CD8-positive, alpha-beta T cell (primary cell): ENCODE measurements at regions of chr4 and their contacts with region 1.

Region 1: DNA sequence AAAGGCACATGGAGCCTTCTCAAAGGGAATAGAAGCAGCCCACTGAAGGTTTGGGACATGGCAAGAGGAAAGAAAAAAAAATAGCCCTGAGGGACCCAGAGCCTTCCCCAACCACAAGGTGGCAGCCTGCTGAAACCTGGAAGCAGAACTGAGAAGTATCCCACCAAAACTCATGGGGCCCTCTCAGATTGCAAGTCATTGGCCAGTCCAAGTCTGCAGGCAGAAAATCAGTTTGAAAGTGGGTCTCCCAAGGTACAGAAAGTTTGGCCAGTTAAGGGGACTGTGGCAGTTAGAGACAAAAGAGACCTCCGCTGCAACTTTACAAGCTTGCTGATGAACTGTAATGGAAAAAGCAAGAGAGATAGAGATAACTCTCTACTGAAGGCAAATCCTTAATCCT is 155.8 kb downstream of the ANTXR2 start:
- DNase-seq: peak; percentile 3 to 63 (median 43)
- ATAC-seq: peak; percentile 42
- H3K4me3 ChIP-seq: no peak overlapping the region
- H3K4me3 Mint-ChIP-seq: no peak overlapping the region
- H3K27ac ChIP-seq: no peak overlapping the region
- H3K27ac Mint-ChIP-seq: no peak overlapping the region
- H3K4me1 ChIP-seq: peaks cover 3% of the 10 kb centered on the region
- H3K4me1 Mint-ChIP-seq: peaks cover 4% of the 10 kb centered on the region
- H3K27me3 ChIP-seq: no peaks in the 10 kb centered on the region
- H3K27me3 Mint-ChIP-seq: no peaks in the 10 kb centered on the region
- CTCF ChIP-seq: peak; percentile 51

Region 2: GRCh38 chr4:79886557-79886956 is 30.7 kb before region 1 on chr4:
- CTCF ChIA-PET with region 1: no interaction called
- POLR2A ChIA-PET with region 1: no interaction called
- intact Hi-C with region 1: no loop called
- DNase-seq: no peak
- ATAC-seq: no peak
- H3K4me3 ChIP-seq: no peak overlapping the region
- H3K4me3 Mint-ChIP-seq: no peak overlapping the region
- H3K27ac ChIP-seq: no peak overlapping the region
- H3K27ac Mint-ChIP-seq: no peak overlapping the region
- H3K4me1 ChIP-seq: no peaks in the 10 kb centered on the region
- H3K4me1 Mint-ChIP-seq: no peaks in the 10 kb centered on the region
- H3K27me3 ChIP-seq: no peaks in the 10 kb centered on the region
- H3K27me3 Mint-ChIP-seq: no peaks in the 10 kb centered on the region
- CTCF ChIP-seq: no peak

Region 3: GRCh38 chr4:80112236-80112635 is 195.0 kb after region 1 on chr4:
- CTCF ChIA-PET with region 1: no interaction called
- POLR2A ChIA-PET with region 1: no interaction called
- intact Hi-C with region 1: no loop called
- DNase-seq: no peak
- ATAC-seq: no peak
- H3K4me3 ChIP-seq: no peak overlapping the region
- H3K4me3 Mint-ChIP-seq: no peak overlapping the region
- H3K27ac ChIP-seq: no peak overlapping the region
- H3K27ac Mint-ChIP-seq: no peak overlapping the region
- H3K4me1 ChIP-seq: no peaks in the 10 kb centered on the region
- H3K4me1 Mint-ChIP-seq: no peaks in the 10 kb centered on the region
- H3K27me3 ChIP-seq: no peaks in the 10 kb centered on the region
- H3K27me3 Mint-ChIP-seq: peaks cover 6% of the 10 kb centered on the region
- CTCF ChIP-seq: no peak

Region 4: DNA sequence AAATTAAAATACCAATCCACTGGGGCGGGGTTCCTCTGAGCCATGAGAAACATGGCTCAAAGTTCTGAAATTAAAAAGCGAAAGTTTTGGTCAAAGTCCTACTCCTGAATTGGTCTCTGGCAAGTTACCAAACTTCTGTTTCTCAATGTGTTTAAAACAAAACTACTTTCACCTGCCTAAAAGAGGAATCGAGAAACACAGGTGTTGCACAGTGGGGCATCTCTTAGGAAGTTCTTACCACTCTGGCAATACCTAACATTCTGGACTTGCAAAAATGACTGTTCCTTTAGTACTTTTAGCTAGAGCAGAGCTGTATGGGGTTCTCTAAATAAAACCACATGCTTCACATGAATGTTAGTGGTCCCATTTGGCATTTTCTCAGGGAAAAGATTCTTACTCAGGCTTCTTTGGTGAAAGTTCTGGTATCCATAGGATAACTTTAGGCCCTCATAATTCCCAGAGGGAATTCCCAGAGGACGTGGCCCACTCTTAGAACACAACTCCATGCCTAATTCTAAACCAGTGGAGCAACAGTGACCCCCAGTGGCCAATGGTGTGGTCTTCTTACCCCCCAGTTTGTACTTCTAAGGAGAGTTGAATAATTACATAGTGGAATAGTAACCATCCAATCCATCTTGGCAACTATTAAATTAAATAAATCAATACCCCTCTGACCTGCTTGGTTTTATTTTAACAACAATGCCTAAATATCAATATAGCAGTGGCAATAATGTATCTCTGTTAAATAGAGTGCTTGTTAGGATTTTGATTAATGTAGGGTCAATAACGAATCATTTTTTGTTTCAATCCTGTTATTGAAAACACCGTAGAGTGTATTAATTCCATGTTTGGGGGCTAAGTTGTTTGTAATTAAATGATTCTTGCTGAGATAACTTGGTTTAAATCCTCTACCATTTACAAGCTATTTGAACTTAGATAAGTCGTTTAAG is 1135.1 kb after region 1 on chr4:
- CTCF ChIA-PET with region 1: no interaction called
- POLR2A ChIA-PET with region 1: no interaction called
- intact Hi-C with region 1: loop called in 1 of 2 experiments (anchors 5 kb)
- DNase-seq: peak; percentile 14 to 73 (median 48)
- ATAC-seq: peak; percentile 42
- H3K4me3 ChIP-seq: no peak overlapping the region
- H3K4me3 Mint-ChIP-seq: no peak overlapping the region
- H3K27ac ChIP-seq: no peak overlapping the region
- H3K27ac Mint-ChIP-seq: no peak overlapping the region
- H3K4me1 ChIP-seq: no peaks in the 10 kb centered on the region
- H3K4me1 Mint-ChIP-seq: no peaks in the 10 kb centered on the region
- H3K27me3 ChIP-seq: no peaks in the 10 kb centered on the region
- H3K27me3 Mint-ChIP-seq: peaks cover 2% of the 10 kb centered on the region
- CTCF ChIP-seq: peak; percentile 45